ENCODE measurements at regions of chr11 and their contacts with region 1.

Region 1: DNA sequence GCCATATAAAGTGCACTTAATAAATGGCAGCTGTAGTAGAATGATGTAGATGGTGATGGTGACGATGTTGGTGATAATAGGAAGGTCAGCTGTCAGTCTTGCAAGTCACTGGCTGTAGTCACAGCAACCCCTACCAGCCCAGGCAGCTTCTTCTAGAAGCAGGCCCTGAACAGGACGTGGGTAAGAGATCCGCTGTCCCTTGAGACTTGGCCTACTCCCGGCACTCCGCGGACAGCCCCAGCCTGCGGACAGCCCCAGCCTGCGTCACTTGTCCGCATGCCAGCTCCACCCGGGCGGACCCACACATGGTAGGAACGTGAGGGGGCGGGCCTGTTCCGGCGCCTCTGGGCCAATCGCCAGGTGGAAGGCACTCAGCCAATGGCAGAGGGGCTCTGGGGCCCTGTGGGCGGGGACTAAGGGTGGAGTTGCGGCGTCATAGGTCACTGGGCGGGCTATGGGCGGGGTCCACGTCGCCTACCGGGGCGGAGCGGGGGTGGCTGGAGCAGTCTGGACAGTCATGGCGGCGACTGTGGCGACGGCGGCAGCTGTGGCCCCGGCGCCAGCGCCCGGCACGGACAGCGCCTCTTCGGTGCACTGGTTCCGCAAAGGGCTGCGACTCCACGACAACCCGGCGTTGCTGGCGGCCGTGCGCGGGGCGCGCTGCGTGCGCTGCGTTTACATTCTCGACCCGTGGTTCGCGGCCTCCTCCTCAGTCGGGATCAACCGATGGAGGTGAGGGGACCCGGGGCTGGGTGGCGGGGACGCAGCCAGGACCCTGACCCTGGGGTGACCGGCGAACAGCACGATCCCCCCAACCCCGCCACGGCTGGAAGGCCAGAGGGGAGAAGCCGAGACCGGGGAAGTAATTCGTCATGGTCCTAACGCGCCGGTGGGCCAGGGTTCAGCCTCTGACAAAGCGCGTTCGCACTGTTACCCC is at the start of gene CRY2:
- DNase-seq: peak; percentile 99
- ATAC-seq: peak; percentile 89
- H3K4me3 Mint-ChIP-seq: peak within 1 kb of the TSS; percentile 76
- H3K27ac Mint-ChIP-seq: peak within 1 kb of the TSS; percentile 74
- H3K4me1 Mint-ChIP-seq: peaks cover 48% of the 10 kb centered on the region
- H3K27me3 Mint-ChIP-seq: peaks cover 19% of the 10 kb centered on the region
- total RNA-seq, gene CRY2: 22.5 to 23.3 TPM

Region 2: DNA sequence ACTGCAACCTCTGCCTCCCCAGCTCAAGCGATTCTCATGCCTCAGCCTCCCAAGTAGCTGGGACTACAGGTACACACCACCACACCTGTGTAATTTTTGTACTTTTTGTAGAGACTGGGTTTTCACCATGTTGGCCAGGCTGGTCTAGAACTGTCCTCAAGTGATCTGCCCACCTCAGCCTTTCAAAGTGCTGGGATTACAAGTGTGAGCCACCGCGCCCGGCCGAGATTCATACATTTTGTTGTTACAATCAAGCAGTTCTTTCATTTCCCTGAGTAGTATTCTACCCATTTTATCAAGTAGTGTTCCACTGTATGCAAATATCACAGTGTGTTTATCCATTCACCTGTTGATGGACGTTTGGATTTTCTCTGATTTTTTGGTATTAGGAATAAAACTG is 68.9 kb before region 1 on chr11:
- CTCF ChIA-PET with region 1: no interaction called
- DNase-seq: peak; percentile 30
- ATAC-seq: no peak
- H3K4me3 Mint-ChIP-seq: no peak overlapping the region
- H3K27ac Mint-ChIP-seq: no peak overlapping the region
- H3K4me1 Mint-ChIP-seq: no peaks in the 10 kb centered on the region
- H3K27me3 Mint-ChIP-seq: peaks cover 23% of the 10 kb centered on the region

Region 3: GRCh38 chr11:45804761-45805304 is 42.4 kb before region 1 on chr11 and contains the start of gene SLC35C1:
- CTCF ChIA-PET with region 1: interaction called, 10 read pairs
- DNase-seq: peak; percentile 98
- ATAC-seq: peak; percentile 94
- H3K4me3 Mint-ChIP-seq: peak within 1 kb of the TSS; percentile 88
- H3K27ac Mint-ChIP-seq: peak within 1 kb of the TSS; percentile 93
- H3K4me1 Mint-ChIP-seq: peaks cover 42% of the 10 kb centered on the region
- H3K27me3 Mint-ChIP-seq: no peaks in the 10 kb centered on the region
- total RNA-seq, gene SLC35C1: 15.2 to 15.7 TPM

Region 4: DNA sequence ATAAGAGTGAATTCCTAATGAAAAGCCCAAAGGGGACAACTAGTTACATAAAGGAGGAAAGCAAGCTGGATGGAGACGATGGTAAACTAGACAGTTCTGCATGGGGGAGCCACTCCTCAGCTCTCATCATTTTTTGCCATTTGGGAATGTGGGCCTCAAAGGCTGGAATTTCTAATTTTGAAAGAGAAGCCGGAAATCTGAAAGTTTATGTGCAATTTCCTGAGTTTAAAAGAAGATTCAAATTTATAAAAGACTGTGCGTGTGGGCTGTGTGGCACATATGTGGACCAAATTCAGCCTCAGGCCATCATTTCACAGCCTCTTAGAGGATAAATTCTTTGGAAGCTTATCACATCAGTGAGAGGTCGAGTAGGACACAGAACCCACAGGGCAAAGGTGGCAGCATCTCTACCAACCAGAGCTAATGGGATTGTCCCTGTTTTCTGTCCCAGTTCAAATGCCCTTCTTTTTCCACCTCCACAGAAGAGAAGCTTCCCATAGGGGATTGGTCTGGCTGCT is 18.2 kb before region 1 on chr11:
- CTCF ChIA-PET with region 1: interaction called, 44 read pairs
- DNase-seq: no peak
- ATAC-seq: no peak
- H3K4me3 Mint-ChIP-seq: no peak overlapping the region
- H3K27ac Mint-ChIP-seq: no peak overlapping the region
- H3K4me1 Mint-ChIP-seq: peaks cover 18% of the 10 kb centered on the region
- H3K27me3 Mint-ChIP-seq: peaks cover 31% of the 10 kb centered on the region

Region 5: GRCh38 chr11:45834298-45834756 is 12.9 kb before region 1 on chr11:
- CTCF ChIA-PET with region 1: interaction called, 44 read pairs
- DNase-seq: peak; percentile 76
- ATAC-seq: peak; percentile 96
- H3K4me3 Mint-ChIP-seq: peak overlapping the region; percentile 76
- H3K27ac Mint-ChIP-seq: peak overlapping the region; percentile 92
- H3K4me1 Mint-ChIP-seq: peaks cover 36% of the 10 kb centered on the region
- H3K27me3 Mint-ChIP-seq: peaks cover 15% of the 10 kb centered on the region

Region 6: DNA sequence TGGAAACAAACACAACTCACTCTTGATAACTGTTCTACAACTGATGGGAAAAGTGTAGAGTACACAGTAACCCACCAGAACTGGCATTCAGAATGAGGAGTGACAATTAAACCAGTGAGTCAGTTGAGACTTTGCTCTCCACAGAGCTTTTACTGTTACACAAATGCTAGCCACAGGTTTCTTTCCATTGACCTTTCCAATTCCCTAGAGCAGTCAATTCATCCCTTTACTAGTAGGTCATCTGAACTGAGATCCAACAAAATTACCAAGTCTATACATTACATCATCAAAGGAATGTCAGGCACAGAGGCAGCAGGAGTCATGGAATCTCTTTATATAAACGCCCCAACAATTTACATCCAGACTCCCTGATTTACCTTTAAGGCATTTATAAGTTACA is 208.1 kb after region 1 on chr11:
- CTCF ChIA-PET with region 1: no interaction called
- DNase-seq: no peak
- ATAC-seq: no peak
- H3K4me3 Mint-ChIP-seq: no peak overlapping the region
- H3K27ac Mint-ChIP-seq: no peak overlapping the region
- H3K4me1 Mint-ChIP-seq: no peaks in the 10 kb centered on the region
- H3K27me3 Mint-ChIP-seq: no peaks in the 10 kb centered on the region